Ovary (tissue), 10 donors: ENCODE measurements at regions of chr4 and their contacts with region 1.

Region 1: DNA sequence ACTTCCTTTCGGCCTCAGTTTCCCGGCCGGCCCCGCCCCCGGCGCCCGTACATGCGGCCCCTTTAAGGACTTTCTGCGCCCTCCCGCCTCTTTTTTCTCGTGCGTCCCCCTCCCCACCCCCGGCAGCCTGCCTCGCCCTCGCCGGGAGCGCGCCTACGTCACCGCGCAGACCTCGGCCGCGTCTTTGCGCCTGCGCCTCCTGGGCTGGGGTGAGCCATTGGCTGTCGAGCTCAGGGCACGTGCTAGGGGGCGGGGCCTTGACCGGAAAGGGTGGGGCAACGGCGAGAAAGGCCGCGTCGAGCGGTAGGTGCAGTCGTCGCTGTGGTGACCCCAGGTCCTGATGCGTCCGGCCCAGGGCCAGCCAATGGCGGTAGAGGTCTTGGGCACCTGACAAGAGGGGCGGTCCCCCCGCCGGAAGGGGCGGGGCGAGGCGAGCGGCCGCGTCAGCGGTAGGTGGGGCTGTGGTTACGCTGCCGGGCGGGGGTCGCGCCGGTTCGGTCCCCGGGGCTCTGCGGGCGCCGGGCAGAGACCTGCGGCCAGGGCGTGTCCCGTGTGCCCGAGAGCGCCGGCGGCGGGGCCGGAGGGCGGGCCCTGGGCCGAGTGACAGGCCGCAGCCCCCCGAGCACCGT is at the start of gene UVSSA:
- DNase-seq: peak; percentile 100
- H3K4me3 ChIP-seq: peak within 1 kb of the TSS; percentile 83
- H3K27ac ChIP-seq: peak within 1 kb of the TSS; percentile 75 to 100
- H3K4me1 ChIP-seq: peaks cover 2% of the 10 kb centered on the region
- H3K27me3 ChIP-seq: no peaks in the 10 kb centered on the region
- CTCF ChIP-seq: no peak
- EP300 ChIP-seq: peak; percentile 94
- POLR2A ChIP-seq: peak; percentile 97
- total RNA-seq, gene UVSSA: 12.1 to 24.7 (median 19.1) TPM

Region 2: DNA sequence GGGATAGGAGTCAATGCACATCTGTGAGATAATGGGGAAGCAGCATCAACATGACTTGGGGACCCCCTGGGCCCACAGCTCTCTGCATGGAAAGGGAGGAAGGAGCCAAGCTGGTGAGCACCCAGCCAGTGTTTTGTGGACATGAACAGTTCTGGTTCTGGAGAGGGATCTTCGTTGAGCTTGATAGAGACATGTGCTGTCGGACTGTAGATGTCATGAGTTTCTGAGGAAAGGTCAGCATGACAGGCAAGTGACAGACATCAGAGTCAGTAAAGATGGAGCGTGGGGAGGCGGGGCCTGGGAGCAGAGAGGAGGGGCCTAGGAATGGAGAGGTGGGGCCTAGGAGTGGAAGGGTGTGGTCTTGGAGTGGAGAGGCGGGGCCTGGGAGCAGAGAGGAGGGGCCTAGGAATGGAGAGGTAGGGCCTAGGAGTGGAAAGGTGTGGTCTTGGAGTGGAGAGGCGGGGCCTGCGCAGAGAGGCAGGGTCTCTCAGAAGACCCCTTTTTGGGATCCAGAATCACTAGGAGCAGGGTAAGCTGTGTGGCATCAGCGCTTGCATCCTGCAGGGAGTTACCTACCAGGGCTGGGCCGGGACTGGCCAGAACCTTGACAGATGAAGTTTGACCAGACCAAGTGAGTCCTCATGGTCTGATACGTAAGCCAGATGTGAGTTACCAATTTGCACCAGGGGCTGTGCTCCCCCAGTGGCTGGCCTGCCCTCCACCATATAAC is 814.1 kb before region 1 on chr4:
- intact Hi-C with region 1: no loop called
- DNase-seq: no peak
- H3K4me3 ChIP-seq: no peak overlapping the region
- H3K27ac ChIP-seq: no peak overlapping the region
- H3K4me1 ChIP-seq: no peaks in the 10 kb centered on the region
- H3K27me3 ChIP-seq: no peaks in the 10 kb centered on the region
- CTCF ChIP-seq: no peak
- EP300 ChIP-seq: no peak
- POLR2A ChIP-seq: no peak

Region 3: GRCh38 chr4:866761-867390 is 480.0 kb before region 1 on chr4:
- intact Hi-C with region 1: no loop called
- DNase-seq: no peak
- H3K4me3 ChIP-seq: no peak overlapping the region
- H3K27ac ChIP-seq: no peak overlapping the region
- H3K4me1 ChIP-seq: no peaks in the 10 kb centered on the region
- H3K27me3 ChIP-seq: no peaks in the 10 kb centered on the region
- CTCF ChIP-seq: no peak
- EP300 ChIP-seq: no peak
- POLR2A ChIP-seq: no peak

Region 4: DNA sequence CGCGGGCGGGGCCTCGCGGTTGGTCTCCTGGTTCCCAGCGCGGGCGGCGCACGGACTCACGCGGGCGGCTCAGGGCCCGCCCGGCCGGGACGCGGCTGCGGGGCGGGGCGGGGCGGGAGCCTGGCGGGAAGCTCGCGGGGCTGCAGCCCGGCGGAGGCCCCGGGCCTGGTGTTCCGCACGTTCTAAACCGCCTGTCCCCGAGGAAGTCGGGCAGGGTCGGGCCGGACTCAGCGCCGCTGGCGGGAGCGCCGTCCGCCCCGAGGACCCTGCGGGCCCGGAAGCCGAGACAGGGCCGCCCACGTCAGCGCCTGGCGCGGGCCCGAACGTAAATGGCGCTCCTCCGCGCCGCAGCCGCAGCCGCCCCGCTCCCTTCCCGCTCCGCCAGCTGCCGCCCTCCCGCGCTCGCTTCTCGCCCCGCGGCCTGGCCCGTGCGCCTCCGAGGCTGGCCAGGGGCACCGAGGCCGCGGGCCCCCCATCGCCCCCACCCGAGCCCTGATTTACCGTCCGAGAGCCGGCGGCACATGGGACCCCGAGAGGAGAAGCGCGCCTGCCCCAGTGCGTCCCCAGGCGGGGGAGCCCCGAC is 97.7 kb before region 1 on chr4:
- intact Hi-C with region 1: loop called (anchors 2 to 5 kb)
- DNase-seq: peak; percentile 84 to 91 (median 87)
- H3K4me3 ChIP-seq: peak overlapping the region; percentile 83
- H3K27ac ChIP-seq: peak overlapping the region; percentile 76 to 97
- H3K4me1 ChIP-seq: peaks cover 38% of the 10 kb centered on the region
- H3K27me3 ChIP-seq: no peaks in the 10 kb centered on the region
- CTCF ChIP-seq: no peak
- EP300 ChIP-seq: no peak
- POLR2A ChIP-seq: no peak

Region 5: GRCh38 chr4:1289207-1290164 is 57.4 kb before region 1 on chr4 and contains the start of gene MAEA:
- intact Hi-C with region 1: loop called in 1 of 4 experiments (anchors 5 kb)
- DNase-seq: peak; percentile 94 to 98 (median 96)
- H3K4me3 ChIP-seq: peak within 1 kb of the TSS; percentile 97
- H3K27ac ChIP-seq: peak within 1 kb of the TSS; percentile 61 to 77
- H3K4me1 ChIP-seq: peaks cover 19% of the 10 kb centered on the region
- H3K27me3 ChIP-seq: no peaks in the 10 kb centered on the region
- CTCF ChIP-seq: no peak
- EP300 ChIP-seq: no peak
- POLR2A ChIP-seq: peak; percentile 56
- total RNA-seq, gene MAEA: 48.3 to 71.3 (median 56.7) TPM

Region 6: DNA sequence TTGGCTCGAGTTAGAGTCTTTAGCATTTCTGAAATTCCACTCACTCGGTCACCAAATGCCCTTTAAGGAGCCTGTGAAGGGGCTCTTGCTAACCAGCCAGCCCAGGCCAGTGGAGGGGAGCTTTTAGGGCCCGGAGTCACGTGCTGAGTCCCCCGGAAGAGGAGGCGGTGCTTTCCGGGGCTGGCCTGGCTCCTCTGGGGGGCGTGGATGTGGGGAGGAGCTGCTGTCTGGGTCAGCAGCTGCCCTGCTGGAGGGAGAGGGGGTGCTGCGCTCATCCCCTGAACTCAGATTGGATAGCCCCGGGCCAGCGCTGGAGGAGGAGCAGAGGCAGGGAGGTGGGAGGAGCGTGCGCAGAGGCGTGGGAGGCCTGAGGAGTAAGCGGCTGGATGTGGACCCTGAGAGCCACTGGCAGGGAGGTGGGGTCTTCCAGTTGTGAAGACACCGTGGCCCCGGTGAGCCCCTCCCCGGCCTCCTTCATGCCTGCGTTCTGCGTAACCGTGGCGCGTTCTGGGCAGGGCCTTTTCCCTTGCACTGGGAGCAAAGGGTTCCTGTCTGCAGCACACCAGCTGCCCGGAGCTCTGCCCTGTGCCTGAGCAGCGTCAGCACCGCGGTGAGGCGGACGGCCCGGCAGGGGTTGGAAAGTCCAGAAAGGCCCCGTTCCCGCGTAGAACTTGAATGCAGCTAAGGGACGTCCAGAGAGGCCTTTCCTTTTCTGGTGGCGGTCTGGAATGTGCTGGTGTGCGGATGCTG is 37.5 kb before region 1 on chr4:
- intact Hi-C with region 1: loop called in 1 of 4 experiments (anchors 2 kb)
- DNase-seq: peak; percentile 93 to 95 (median 93)
- H3K4me3 ChIP-seq: peak overlapping the region; percentile 35
- H3K27ac ChIP-seq: peak overlapping the region in 1 of 2 donors; percentile 64
- H3K4me1 ChIP-seq: peaks cover 24% of the 10 kb centered on the region
- H3K27me3 ChIP-seq: no peaks in the 10 kb centered on the region
- CTCF ChIP-seq: peak in 1 of 3 donors; percentile 8
- EP300 ChIP-seq: no peak
- POLR2A ChIP-seq: no peak

Region 7: GRCh38 chr4:1417522-1418390 is 70.9 kb after region 1 on chr4:
- intact Hi-C with region 1: no loop called
- DNase-seq: peak in 1 of 5 donors; percentile 3
- H3K4me3 ChIP-seq: no peak overlapping the region
- H3K27ac ChIP-seq: no peak overlapping the region
- H3K4me1 ChIP-seq: no peaks in the 10 kb centered on the region
- H3K27me3 ChIP-seq: no peaks in the 10 kb centered on the region
- CTCF ChIP-seq: no peak
- EP300 ChIP-seq: no peak
- POLR2A ChIP-seq: no peak

Region 8: GRCh38 chr4:1711055-1711570 is 364.2 kb after region 1 on chr4:
- intact Hi-C with region 1: no loop called
- DNase-seq: no peak
- H3K4me3 ChIP-seq: peak overlapping the region; percentile 83
- H3K27ac ChIP-seq: peak overlapping the region; percentile 77 to 100
- H3K4me1 ChIP-seq: peaks cover 9% of the 10 kb centered on the region
- H3K27me3 ChIP-seq: no peaks in the 10 kb centered on the region
- CTCF ChIP-seq: no peak
- EP300 ChIP-seq: no peak
- POLR2A ChIP-seq: no peak

Region 9: GRCh38 chr4:1721004-1721665 is 374.2 kb after region 1 on chr4 and contains the starts of genes TACC3 and TMEM129:
- intact Hi-C with region 1: loop called in 1 of 4 experiments (anchors 5 kb)
- DNase-seq: peak; percentile 91 to 94 (median 92)
- H3K4me3 ChIP-seq: peak within 1 kb of the TSS; percentile 46
- H3K27ac ChIP-seq: peak within 1 kb of the TSS; percentile 0 to 90
- H3K4me1 ChIP-seq: peaks cover 8% of the 10 kb centered on the region
- H3K27me3 ChIP-seq: no peaks in the 10 kb centered on the region
- CTCF ChIP-seq: no peak
- EP300 ChIP-seq: no peak
- POLR2A ChIP-seq: peak; percentile 18
- total RNA-seq, gene TACC3: 2.1 to 10.4 (median 6.0) TPM
- total RNA-seq, gene TMEM129: 27.6 to 42.5 (median 40.3) TPM